CD14-positive monocyte (primary cell): ENCODE measurements at regions of chr19 and their contacts with region 1.

Region 1: GRCh38 chr19:3479834-3480215 is 500 bp downstream of the SMIM24 start:
- DNase-seq: no peak
- H3K4me3 ChIP-seq: no peak overlapping the region
- H3K4me3 Mint-ChIP-seq: no peak overlapping the region
- H3K27ac ChIP-seq: no peak overlapping the region
- H3K27ac Mint-ChIP-seq: peak overlapping the region in 2 of 7 donors; percentile 13 to 66
- H3K4me1 ChIP-seq: peaks cover 9 to 18% of the 10 kb centered on the region in 2 donors
- H3K4me1 Mint-ChIP-seq: peaks cover 15% of the 10 kb centered on the region
- H3K27me3 ChIP-seq: no peaks in the 10 kb centered on the region
- H3K27me3 Mint-ChIP-seq: peaks cover 2 to 17% (median 14%) of the 10 kb centered on the region in 3 donors
- CTCF ChIP-seq: no peak

Region 2: GRCh38 chr19:3304871-3305423 is 174.9 kb before region 1 on chr19:
- intact Hi-C with region 1: loop called in 1 of 2 experiments (anchors 1 kb)
- DNase-seq: peak; percentile 32 to 46 (median 39)
- H3K4me3 ChIP-seq: no peak overlapping the region
- H3K4me3 Mint-ChIP-seq: no peak overlapping the region
- H3K27ac ChIP-seq: no peak overlapping the region
- H3K27ac Mint-ChIP-seq: no peak overlapping the region
- H3K4me1 ChIP-seq: no peaks in the 10 kb centered on the region
- H3K4me1 Mint-ChIP-seq: no peaks in the 10 kb centered on the region
- H3K27me3 ChIP-seq: no peaks in the 10 kb centered on the region
- H3K27me3 Mint-ChIP-seq: peaks cover 9 to 22% (median 11%) of the 10 kb centered on the region in 3 donors
- CTCF ChIP-seq: peak; percentile 80